ENCODE measurements at regions of chr1 and their contacts with region 1.

Region 1: DNA sequence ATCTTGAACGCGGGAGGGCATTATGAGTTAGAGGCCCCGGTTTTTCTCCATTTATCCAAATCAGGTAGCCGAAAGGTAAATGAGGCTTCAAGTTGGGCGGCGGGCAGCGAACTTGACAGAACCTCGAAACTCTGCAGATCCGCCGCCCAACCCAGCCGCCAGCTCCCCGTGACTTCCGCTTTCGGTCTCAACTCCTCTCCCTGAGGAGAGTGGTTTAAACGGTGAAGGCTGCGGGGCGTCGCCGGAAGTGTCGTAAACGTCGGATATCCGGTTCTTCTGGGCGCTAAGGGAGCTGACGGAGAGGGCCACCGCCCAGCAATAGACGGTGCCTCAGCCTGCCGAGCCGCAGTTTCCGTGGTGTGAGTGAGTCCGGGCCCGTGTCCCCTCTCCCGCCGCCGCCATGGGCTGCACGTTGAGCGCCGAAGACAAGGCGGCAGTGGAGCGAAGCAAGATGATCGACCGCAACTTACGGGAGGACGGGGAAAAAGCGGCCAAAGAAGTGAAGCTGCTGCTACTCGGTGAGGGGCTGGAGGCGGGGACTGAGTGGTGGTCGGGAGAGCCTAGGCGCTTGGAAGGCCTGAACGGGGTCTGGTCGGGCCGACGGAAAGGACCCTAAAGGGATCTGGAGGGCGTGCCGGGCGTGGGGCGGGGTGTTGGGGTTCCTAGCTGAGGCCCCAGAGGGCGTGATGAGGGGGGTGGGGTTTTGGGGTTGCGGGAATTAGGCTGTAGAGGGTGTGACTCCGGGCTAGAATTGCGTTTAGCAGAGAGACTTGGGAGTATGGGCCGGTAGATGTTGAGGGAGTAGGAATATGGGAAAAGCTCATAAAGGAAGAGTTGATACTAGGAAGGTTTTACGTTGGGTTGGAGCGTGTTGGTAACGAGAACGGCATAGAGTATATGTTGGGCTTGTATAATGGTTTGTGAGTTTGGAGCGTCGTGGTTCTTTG is at the start of gene GNAI3:
- DNase-seq: peak; percentile 92 to 99 (median 94)
- ATAC-seq: peak; percentile 96
- H3K4me3 ChIP-seq: peak within 1 kb of the TSS; percentile 94
- H3K27ac ChIP-seq: peak within 1 kb of the TSS; percentile 91
- H3K4me1 ChIP-seq: peaks cover 4 to 5% of the 10 kb centered on the region in 2 experiments
- H3K27me3 ChIP-seq: no peaks in the 10 kb centered on the region
- CTCF ChIP-seq: no peak; a peak in 1 of 6 replicates
- EP300 ChIP-seq: no peak
- POLR2A ChIP-seq: peak; percentile 98
- RAD21 ChIP-seq: no peak; a peak in 2 of 4 replicates
- polyA plus RNA-seq, gene GNAI3: 6.9 to 8.0 TPM

Region 2: GRCh38 chr1:109559995-109560394 is 11.4 kb after region 1 on chr1:
- CTCF ChIA-PET with region 1: no interaction called
- POLR2A ChIA-PET with region 1: interaction called, 48 read pairs
- in situ Hi-C with region 1: no loop called
- intact Hi-C with region 1: no loop called
- DNase-seq: no peak
- ATAC-seq: no peak
- H3K4me3 ChIP-seq: no peak overlapping the region
- H3K27ac ChIP-seq: no peak overlapping the region
- H3K4me1 ChIP-seq: peaks cover 4 to 17% of the 10 kb centered on the region in 2 experiments
- H3K27me3 ChIP-seq: no peaks in the 10 kb centered on the region
- CTCF ChIP-seq: no peak
- EP300 ChIP-seq: no peak
- POLR2A ChIP-seq: no peak
- RAD21 ChIP-seq: no peak

Region 3: DNA sequence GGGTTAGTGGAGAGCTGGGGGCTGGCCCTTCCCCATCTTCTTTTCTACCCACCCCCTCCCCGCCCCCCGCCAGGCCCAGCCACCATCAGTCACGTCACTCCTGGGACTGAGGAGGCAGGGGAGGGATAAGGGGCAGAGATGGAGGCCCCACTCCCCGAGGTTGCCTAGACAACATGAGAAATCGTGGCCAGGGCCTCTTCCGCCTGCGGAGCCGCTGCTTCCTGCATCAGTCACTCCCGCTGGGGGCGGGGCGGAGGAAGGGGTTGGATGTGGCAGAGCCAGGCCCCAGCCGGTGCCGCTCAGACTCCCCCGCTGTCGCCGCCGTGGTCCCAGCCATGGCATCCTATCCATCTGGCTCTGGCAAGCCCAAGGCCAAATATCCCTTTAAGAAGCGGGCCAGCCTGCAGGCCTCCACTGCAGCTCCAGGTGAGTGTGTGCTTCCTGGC is 72.3 kb after region 1 on chr1:
- CTCF ChIA-PET with region 1: no interaction called
- POLR2A ChIA-PET with region 1: interaction called, 13 read pairs
- in situ Hi-C with region 1: loop called (anchors 5 kb)
- intact Hi-C with region 1: loop called (anchors 5 kb)
- DNase-seq: peak; percentile 93 to 96 (median 94)
- ATAC-seq: peak; percentile 84
- H3K4me3 ChIP-seq: peak overlapping the region; percentile 61
- H3K27ac ChIP-seq: peak overlapping the region; percentile 90; the same call in 1 of the 3 replicates
- H3K4me1 ChIP-seq: peaks cover 32 to 61% of the 10 kb centered on the region in 2 experiments
- H3K27me3 ChIP-seq: no peaks in the 10 kb centered on the region
- CTCF ChIP-seq: no peak
- EP300 ChIP-seq: no peak
- POLR2A ChIP-seq: no peak
- RAD21 ChIP-seq: no peak

Region 4: DNA sequence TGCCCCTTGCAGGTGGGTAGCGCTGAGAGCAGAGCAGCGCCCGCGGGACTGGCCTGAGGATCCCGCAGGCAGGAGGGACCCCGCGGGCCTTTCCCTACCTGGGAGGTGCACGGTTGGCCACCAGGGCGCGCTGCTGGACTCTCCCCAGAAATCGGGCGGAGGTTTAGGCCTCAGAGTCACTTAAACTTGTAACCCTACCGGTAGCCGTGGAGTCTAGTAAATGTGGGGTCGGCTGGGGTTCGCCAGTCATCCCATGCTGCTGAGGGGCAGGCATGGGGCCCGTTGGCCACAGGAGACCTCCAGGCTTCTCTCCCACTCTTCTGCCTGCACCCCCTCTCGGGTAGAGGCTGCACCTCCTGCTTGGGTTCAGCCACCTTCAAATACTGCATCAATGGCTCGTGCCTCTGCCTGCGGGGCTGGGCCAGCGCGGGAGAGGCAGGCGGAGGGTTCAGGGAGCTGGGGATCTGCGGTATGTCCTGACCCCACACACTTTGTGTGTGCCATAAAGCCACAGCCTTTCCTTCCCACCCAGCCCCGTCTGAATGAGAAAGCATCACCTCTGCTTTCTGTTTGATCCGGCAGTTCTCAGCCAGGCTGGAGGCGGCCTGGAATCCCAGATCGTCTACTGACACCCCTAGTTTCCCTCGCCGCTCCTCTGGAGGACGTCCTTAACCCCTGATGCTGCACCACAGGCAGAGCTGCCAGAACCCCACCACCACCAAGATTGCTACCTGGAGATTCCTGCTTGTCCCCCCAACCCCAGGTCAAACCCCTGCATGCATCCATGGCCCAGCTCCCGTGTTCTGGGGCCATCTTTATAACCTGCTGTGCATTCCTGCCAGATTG is 95.0 kb after region 1 on chr1:
- CTCF ChIA-PET with region 1: interaction called, 5 read pairs
- POLR2A ChIA-PET with region 1: interaction called, 44 read pairs
- in situ Hi-C with region 1: no loop called
- intact Hi-C with region 1: loop called (anchors 2 kb)
- DNase-seq: peak; percentile 84 to 91 (median 86)
- ATAC-seq: peak; percentile 97
- H3K4me3 ChIP-seq: no peak overlapping the region
- H3K27ac ChIP-seq: no peak overlapping the region
- H3K4me1 ChIP-seq: peaks cover 26 to 46% of the 10 kb centered on the region in 2 experiments
- H3K27me3 ChIP-seq: no peaks in the 10 kb centered on the region; a peak in 1 of 5 replicates
- CTCF ChIP-seq: peak; percentile 96 to 97 (median 97)
- EP300 ChIP-seq: no peak
- POLR2A ChIP-seq: no peak
- RAD21 ChIP-seq: peak; percentile 91 to 96

Region 5: DNA sequence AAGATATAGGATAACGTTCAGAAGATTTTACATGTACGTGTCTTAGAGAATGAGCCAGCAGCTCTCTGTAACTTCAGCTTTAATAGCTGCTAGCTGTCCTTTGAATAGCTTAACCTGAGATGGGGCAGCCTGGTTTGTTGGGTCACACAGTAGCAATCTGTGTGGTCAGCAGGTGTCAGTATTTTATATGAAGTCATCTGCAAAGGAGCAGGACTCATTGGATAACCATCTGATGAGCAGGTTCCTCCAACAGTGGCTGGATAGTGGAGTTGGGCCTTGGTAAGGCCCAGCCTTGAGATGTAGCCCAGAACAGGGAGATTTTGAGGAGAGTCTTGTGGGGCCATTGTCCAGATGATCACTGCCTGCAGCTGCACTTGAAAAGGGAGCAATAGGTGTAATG is 169.9 kb after region 1 on chr1:
- CTCF ChIA-PET with region 1: no interaction called
- POLR2A ChIA-PET with region 1: no interaction called
- in situ Hi-C with region 1: no loop called
- intact Hi-C with region 1: loop called (anchors 5 kb)
- DNase-seq: peak; percentile 44 to 53 (median 48)
- ATAC-seq: peak; percentile 73
- H3K4me3 ChIP-seq: no peak overlapping the region
- H3K27ac ChIP-seq: peak overlapping the region; percentile 43; the same call in 2 of the 3 replicates
- H3K4me1 ChIP-seq: peaks cover 5 to 21% of the 10 kb centered on the region in 2 experiments; a peak in 4 of 5 replicates
- H3K27me3 ChIP-seq: peaks cover 0 to 6% of the 10 kb centered on the region in 2 experiments; a peak in 2 of 5 replicates
- CTCF ChIP-seq: peak; percentile 28 to 73 (median 43)
- EP300 ChIP-seq: no peak
- POLR2A ChIP-seq: no peak
- RAD21 ChIP-seq: peak; percentile 70 to 82

Region 6: GRCh38 chr1:109739738-109740660 is 191.4 kb after region 1 on chr1:
- CTCF ChIA-PET with region 1: no interaction called
- POLR2A ChIA-PET with region 1: no interaction called
- in situ Hi-C with region 1: no loop called
- intact Hi-C with region 1: no loop called
- DNase-seq: peak; percentile 58 to 78 (median 76)
- ATAC-seq: peak; percentile 95
- H3K4me3 ChIP-seq: peak overlapping the region; percentile 34
- H3K27ac ChIP-seq: no peak overlapping the region; the same call in 2 of the 3 replicates
- H3K4me1 ChIP-seq: peaks cover 0 to 12% of the 10 kb centered on the region in 2 experiments; a peak in 2 of 5 replicates
- H3K27me3 ChIP-seq: peaks cover 7 to 8% of the 10 kb centered on the region in 2 experiments; a peak in 3 of 5 replicates
- CTCF ChIP-seq: no peak
- EP300 ChIP-seq: no peak
- POLR2A ChIP-seq: 0 out of 2 replicates have a peak, but pooled peaks have one; percentile 31
- RAD21 ChIP-seq: no peak

Region 7: DNA sequence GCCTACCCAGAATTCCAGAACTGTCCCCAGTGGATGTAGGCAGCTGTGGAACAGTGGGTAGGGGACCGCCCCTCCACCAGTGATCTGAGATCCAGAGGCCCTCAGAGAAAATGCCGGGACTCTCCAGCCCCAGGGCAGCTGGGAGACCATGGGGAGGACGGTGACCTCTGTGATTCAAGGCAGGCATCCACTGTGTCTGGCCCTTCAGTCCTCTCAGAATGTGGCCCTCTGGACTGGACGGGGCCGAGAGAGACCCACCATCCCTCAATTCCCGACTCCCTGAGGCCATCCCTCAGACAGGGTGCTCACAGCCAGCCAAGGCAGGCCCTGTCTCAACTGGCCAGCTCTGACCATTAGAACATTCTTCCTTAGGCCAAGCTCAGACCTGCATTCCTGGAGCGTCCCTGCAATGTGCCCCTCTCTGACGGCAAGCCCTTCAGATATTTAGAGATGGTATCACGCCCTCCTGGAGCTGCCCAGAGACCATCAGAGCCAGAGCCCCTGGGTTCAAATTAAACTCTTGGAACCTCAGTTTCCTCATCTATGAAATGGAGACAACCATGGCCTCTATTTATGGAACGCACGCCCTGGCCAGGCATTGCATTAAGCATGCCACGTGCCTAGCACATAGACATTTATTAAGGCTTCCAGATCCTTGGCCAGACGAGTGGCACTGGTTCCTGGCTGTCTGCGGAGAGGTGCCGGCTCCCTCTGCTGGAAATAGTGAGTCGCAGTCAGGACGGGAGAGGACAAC is 224.7 kb after region 1 on chr1:
- CTCF ChIA-PET with region 1: interaction called, 38 read pairs
- POLR2A ChIA-PET with region 1: interaction called, 5 read pairs
- in situ Hi-C with region 1: no loop called
- intact Hi-C with region 1: loop called (anchors 1 kb)
- DNase-seq: peak; percentile 67 to 90 (median 76)
- ATAC-seq: peak; percentile 95
- H3K4me3 ChIP-seq: no peak overlapping the region
- H3K27ac ChIP-seq: no peak overlapping the region
- H3K4me1 ChIP-seq: peaks cover 11 to 12% of the 10 kb centered on the region in 2 experiments; a peak in 3 of 5 replicates
- H3K27me3 ChIP-seq: peaks cover 2 to 23% of the 10 kb centered on the region in 2 experiments; a peak in 3 of 5 replicates
- CTCF ChIP-seq: peak; percentile 97 to 99 (median 98)
- EP300 ChIP-seq: no peak
- POLR2A ChIP-seq: no peak
- RAD21 ChIP-seq: peak; percentile 100

Region 8: GRCh38 chr1:109821831-109822745 is 273.5 kb after region 1 on chr1:
- CTCF ChIA-PET with region 1: no interaction called
- POLR2A ChIA-PET with region 1: no interaction called
- in situ Hi-C with region 1: no loop called
- intact Hi-C with region 1: no loop called
- DNase-seq: peak; percentile 88 to 94 (median 90)
- ATAC-seq: peak; percentile 77
- H3K4me3 ChIP-seq: no peak overlapping the region
- H3K27ac ChIP-seq: peak overlapping the region; percentile 80
- H3K4me1 ChIP-seq: peaks cover 63 to 79% of the 10 kb centered on the region in 2 experiments
- H3K27me3 ChIP-seq: no peaks in the 10 kb centered on the region
- CTCF ChIP-seq: no peak
- EP300 ChIP-seq: peak; percentile 73
- POLR2A ChIP-seq: peak; percentile 64
- RAD21 ChIP-seq: peak; percentile 5 to 17; a peak in 2 of 4 replicates

Measured in K562 (cell line).